Naive thymus-derived CD4-positive, alpha-beta T cell (primary cell): ENCODE measurements at regions of chr4 and their contacts with region 1.

Region 1: DNA sequence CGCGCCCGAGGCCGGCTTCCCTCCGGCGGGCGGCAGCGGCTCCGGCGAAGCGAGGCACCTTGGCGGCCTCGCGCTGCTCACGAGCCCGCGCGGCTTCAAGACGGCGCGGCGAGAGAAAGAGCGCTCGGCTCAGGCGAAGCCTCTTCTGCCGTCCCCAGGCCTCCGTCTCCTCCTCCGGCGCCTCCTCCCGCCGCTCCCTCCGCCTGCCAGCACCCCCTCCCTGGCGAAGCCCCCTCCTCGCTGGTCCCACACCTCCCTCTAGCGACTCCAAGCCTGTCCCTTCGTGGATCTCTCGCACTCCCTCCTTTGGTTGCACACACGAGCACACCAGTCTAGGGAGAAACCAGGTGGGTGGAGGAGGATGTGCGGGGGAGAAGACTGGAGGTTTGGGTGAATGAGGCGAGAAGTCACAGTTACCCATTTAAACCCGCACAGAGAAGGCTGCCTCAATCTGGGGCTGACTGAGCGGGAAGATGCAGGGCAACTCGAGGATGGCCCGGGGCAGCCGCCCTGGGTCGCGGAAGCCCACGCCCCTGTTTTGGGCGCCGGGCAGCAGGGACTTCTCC is at the start of gene CAMK2D:
- DNase-seq: peak; percentile 66 to 91 (median 87)
- ATAC-seq: peak; percentile 71
- H3K4me3 ChIP-seq: peak within 1 kb of the TSS; percentile 97
- H3K4me3 Mint-ChIP-seq: peak within 1 kb of the TSS; percentile 92 to 100 (median 96)
- H3K27ac ChIP-seq: peak within 1 kb of the TSS; percentile 93
- H3K27ac Mint-ChIP-seq: peak within 1 kb of the TSS; percentile 96 to 100 (median 98)
- H3K4me1 ChIP-seq: peaks cover 5 to 18% of the 10 kb centered on the region in 2 donors
- H3K4me1 Mint-ChIP-seq: peaks cover 15 to 51% (median 43%) of the 10 kb centered on the region in 7 donors
- H3K27me3 ChIP-seq: no peaks in the 10 kb centered on the region
- H3K27me3 Mint-ChIP-seq: peaks cover 0 to 3% (median 0%) of the 10 kb centered on the region in 5 donors
- total RNA-seq, gene CAMK2D: 35.8 to 41.2 (median 40.0) TPM

Region 2: DNA sequence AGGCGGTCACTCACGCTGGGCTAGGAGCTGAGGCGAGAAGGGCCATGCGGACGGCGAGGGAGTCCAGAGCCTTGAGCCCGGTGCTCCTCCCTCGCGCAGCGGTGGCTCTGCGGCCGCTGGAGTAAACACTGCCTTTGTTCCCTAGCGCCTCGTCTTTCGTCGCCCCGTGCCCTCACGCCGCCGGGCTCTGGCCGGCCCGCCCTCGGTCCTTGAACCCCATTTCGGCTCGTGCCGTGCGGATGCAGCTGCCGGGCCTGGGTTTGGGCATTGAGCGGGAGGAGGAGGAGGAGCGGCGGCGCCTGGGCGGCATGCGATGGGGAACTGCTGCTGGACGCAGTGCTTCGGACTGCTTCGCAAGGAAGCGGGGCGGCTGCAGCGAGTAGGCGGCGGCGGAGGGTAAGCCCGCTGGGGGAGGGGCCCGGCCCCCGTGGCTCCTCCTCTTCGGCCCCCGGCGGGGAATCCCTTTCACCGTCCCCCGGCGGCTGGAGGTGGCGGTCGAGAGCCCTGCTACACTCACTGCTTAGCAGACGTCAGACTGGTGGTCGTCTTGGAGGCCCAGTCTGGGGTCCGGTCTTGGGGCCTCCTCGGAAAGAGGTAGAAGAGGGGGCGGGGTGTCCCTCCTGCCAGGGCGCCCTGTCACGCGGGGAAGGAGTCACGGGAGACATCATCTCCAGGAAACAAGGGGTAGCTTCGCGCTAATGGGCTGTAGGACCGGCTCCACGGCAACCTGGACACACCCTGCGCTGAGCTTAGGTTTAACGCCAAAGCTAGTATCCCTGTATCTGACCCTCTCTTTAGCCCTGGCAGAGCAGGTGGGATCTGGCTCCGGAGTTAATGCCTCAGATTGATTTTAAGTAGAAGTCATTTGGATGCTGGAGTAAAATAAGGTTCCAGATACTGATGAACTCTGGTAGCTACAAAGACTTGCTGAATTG is 1529.7 kb before region 1 on chr4 and contains the start of gene AP1AR:
- CTCF ChIA-PET with region 1: no interaction called
- POLR2A ChIA-PET with region 1: no interaction called
- intact Hi-C with region 1: loop called (anchors 1 to 5 kb)
- DNase-seq: peak; percentile 61 to 87 (median 71)
- ATAC-seq: peak; percentile 73
- H3K4me3 ChIP-seq: peak within 1 kb of the TSS; percentile 71
- H3K4me3 Mint-ChIP-seq: peak within 1 kb of the TSS; percentile 86 to 99 (median 96)
- H3K27ac ChIP-seq: peak within 1 kb of the TSS; percentile 85
- H3K27ac Mint-ChIP-seq: peak within 1 kb of the TSS; percentile 91 to 100 (median 99)
- H3K4me1 ChIP-seq: peaks cover 3 to 12% of the 10 kb centered on the region in 2 donors
- H3K4me1 Mint-ChIP-seq: peaks cover 19 to 50% (median 33%) of the 10 kb centered on the region in 7 donors
- H3K27me3 ChIP-seq: no peaks in the 10 kb centered on the region
- H3K27me3 Mint-ChIP-seq: peaks cover under 1 to 4% (median 1%) of the 10 kb centered on the region in 5 donors
- total RNA-seq, gene AP1AR: 7.3 to 21.0 (median 17.0) TPM

Region 3: DNA sequence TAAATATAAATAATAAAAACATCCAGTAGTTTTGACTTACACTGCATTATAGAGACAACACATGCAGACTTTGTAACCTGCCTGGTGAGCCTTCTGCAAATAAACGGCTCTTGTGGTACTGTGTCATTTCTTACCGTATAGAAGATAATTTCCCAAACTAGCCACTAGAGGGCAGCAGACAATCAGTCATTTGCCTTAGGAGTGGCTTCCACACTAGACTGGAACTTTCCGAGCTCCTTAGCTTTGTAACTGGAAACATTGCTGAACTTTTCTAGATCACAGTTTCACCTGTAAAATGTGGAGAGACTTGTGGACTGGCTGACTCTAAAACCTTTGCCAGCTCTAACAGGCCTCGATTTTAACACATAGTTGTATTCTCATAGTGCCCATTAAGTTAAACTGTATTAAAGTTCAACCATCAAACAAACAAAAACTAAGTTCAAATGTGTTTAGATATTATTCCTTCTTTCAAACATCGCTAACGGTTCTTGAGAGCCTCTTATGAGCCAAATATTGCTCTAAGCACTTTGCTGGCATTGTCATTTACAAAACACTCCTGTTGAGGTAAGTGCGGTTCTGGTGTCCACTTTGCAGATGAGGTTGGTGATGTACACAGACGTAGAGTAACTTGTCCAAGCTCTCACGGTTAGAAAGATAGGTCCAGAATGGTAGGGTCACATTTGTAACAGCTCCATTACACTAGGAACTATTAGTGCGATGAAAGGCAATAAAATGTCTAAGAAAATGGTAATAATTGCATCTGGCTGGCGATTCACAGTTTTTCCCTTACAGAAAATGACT is 366.8 kb before region 1 on chr4:
- CTCF ChIA-PET with region 1: no interaction called
- POLR2A ChIA-PET with region 1: no interaction called
- intact Hi-C with region 1: loop called (anchors 1 kb)
- DNase-seq: peak in 8 of 9 donors; percentile 35 to 77 (median 66)
- ATAC-seq: peak; percentile 90
- H3K4me3 ChIP-seq: no peak overlapping the region
- H3K4me3 Mint-ChIP-seq: no peak overlapping the region
- H3K27ac ChIP-seq: no peak overlapping the region
- H3K27ac Mint-ChIP-seq: no peak overlapping the region
- H3K4me1 ChIP-seq: no peaks in the 10 kb centered on the region
- H3K4me1 Mint-ChIP-seq: peaks cover 0 to 2% (median 0%) of the 10 kb centered on the region in 7 donors
- H3K27me3 ChIP-seq: no peaks in the 10 kb centered on the region
- H3K27me3 Mint-ChIP-seq: peaks cover 0 to 7% (median 4%) of the 10 kb centered on the region in 5 donors

Region 4: GRCh38 chr4:113636438-113636818 is 125.3 kb before region 1 on chr4:
- CTCF ChIA-PET with region 1: no interaction called
- POLR2A ChIA-PET with region 1: interaction called, 6 read pairs
- intact Hi-C with region 1: loop called (anchors 1 kb)
- DNase-seq: peak in 7 of 9 donors; percentile 28 to 58 (median 38)
- ATAC-seq: peak; percentile 79
- H3K4me3 ChIP-seq: peak overlapping the region; percentile 5
- H3K4me3 Mint-ChIP-seq: peak overlapping the region; percentile 0 to 79 (median 66)
- H3K27ac ChIP-seq: no peak overlapping the region
- H3K27ac Mint-ChIP-seq: peak overlapping the region; percentile 20 to 89 (median 70)
- H3K4me1 ChIP-seq: peaks cover 15 to 23% of the 10 kb centered on the region in 2 donors
- H3K4me1 Mint-ChIP-seq: peaks cover 31 to 61% (median 51%) of the 10 kb centered on the region in 7 donors
- H3K27me3 ChIP-seq: no peaks in the 10 kb centered on the region
- H3K27me3 Mint-ChIP-seq: no peaks in the 10 kb centered on the region

Region 5: GRCh38 chr4:113781439-113782040 is 19.8 kb after region 1 on chr4:
- CTCF ChIA-PET with region 1: interaction called, 3 read pairs
- POLR2A ChIA-PET with region 1: no interaction called
- intact Hi-C with region 1: loop called (anchors 1 kb)
- DNase-seq: peak in 5 of 9 donors; percentile 21 to 28 (median 27)
- ATAC-seq: peak; percentile 41
- H3K4me3 ChIP-seq: no peak overlapping the region
- H3K4me3 Mint-ChIP-seq: no peak overlapping the region
- H3K27ac ChIP-seq: no peak overlapping the region
- H3K27ac Mint-ChIP-seq: no peak overlapping the region
- H3K4me1 ChIP-seq: no peaks in the 10 kb centered on the region
- H3K4me1 Mint-ChIP-seq: peaks cover 5 to 24% (median 12%) of the 10 kb centered on the region in 7 donors
- H3K27me3 ChIP-seq: no peaks in the 10 kb centered on the region
- H3K27me3 Mint-ChIP-seq: no peaks in the 10 kb centered on the region

Region 6: DNA sequence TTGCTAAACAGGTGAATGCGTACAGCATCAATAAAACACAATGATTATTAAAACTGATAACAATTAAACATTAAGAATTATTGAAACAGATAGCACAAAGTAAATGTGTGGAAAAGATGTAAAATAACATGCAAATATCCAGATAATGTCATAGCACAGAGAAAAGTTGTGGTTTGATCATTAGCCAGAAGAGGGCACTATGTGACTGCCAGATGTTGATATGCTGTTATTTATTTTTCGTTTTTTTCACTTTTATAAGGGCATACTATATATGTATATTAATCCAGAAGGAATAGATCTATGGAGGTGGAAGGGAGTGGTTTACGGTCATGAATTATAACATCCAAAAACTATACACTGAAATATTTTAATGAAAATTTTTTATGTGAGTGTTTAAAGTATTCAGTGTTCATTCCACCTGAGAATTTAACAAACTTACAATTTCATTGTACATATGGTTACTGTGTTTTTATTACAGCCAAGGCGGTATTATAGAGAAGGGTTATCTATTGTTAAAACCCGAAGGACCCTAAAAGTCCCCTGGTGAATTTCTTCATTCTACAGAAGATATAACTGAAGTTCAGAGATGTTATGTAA is 625.0 kb after region 1 on chr4:
- CTCF ChIA-PET with region 1: interaction called, 4 read pairs
- POLR2A ChIA-PET with region 1: no interaction called
- intact Hi-C with region 1: loop called in 1 of 2 experiments (anchors 10 kb)
- DNase-seq: peak in 2 of 9 donors; percentile 10 to 11
- ATAC-seq: no peak
- H3K4me3 ChIP-seq: no peak overlapping the region
- H3K4me3 Mint-ChIP-seq: no peak overlapping the region
- H3K27ac ChIP-seq: no peak overlapping the region
- H3K27ac Mint-ChIP-seq: no peak overlapping the region
- H3K4me1 ChIP-seq: no peaks in the 10 kb centered on the region
- H3K4me1 Mint-ChIP-seq: peaks cover 0 to 2% (median 0%) of the 10 kb centered on the region in 7 donors
- H3K27me3 ChIP-seq: no peaks in the 10 kb centered on the region
- H3K27me3 Mint-ChIP-seq: peaks cover 0 to 17% (median 14%) of the 10 kb centered on the region in 5 donors